ENCODE measurements at regions of chr2 and their contacts with region 1.

Region 1: GRCh38 chr2:169109502-169110409 is 40.4 kb downstream of the DHRS9 start:
- DNase-seq: peak; percentile 81
- H3K4me3 ChIP-seq: no peak overlapping the region
- H3K27ac ChIP-seq: no peak overlapping the region
- H3K4me1 ChIP-seq: peaks cover 11% of the 10 kb centered on the region
- H3K27me3 ChIP-seq: no peaks in the 10 kb centered on the region
- CTCF ChIP-seq: peak; percentile 82 to 91
- POLR2A ChIP-seq: no peak

Region 2: DNA sequence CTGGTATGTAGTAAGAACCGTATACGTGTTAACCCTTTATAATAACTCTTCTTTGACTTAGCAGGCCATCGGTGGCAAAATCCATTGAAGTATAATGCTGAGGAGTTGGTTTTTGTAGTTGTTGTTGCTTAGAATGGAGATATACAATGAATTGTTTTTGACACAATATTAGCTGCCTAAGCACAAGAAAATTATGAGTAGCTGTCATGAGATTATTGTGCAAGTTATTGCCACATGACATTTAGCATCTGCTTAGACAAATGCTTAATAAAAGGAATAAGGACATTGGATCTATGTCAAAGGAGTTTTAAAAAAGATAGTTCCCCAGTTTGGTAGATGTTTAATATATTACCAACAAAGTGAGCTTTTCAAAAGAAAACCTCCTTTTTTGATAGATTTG is 138.5 kb before region 1 on chr2:
- CTCF ChIA-PET with region 1: interaction called, 13 read pairs
- POLR2A ChIA-PET with region 1: no interaction called
- dilution Hi-C with region 1: no loop called
- intact Hi-C with region 1: no loop called
- DNase-seq: no peak
- H3K4me3 ChIP-seq: no peak overlapping the region
- H3K27ac ChIP-seq: no peak overlapping the region
- H3K4me1 ChIP-seq: no peaks in the 10 kb centered on the region
- H3K27me3 ChIP-seq: no peaks in the 10 kb centered on the region
- CTCF ChIP-seq: no peak
- POLR2A ChIP-seq: no peak

Region 3: DNA sequence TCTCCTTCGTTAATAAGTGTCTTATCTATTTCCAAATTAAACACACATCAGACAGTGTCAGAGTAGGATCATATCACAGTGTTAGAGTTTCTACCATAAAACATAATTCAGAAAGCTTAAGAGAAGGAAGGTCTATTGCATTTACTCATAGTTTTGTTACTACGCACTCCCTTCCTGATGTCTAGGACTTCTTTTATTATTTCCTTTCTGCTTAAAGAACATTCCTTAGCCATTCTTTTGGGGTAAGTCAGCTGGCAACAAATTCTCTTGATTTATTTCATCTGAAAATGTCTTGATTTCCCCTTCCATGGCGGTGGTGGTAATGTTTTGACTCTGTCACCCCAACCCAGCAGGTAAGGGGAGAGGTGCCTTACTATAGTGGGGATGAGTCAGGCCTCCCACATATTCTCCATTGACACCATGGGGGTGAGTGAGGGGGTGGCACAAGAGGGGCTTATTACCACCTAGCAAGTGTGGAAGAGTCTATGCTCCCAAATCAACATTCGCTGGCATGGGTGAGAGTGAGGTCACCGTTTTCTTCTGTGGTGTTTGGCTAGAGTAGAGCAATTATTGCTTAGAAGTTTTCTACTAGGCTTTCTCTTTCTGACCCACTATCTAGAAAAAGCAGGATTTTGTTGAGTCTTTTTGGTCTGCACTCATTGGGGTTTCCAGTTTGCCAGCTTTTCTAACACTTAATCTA is 108.5 kb before region 1 on chr2:
- CTCF ChIA-PET with region 1: interaction called, 6 read pairs
- POLR2A ChIA-PET with region 1: no interaction called
- dilution Hi-C with region 1: no loop called
- intact Hi-C with region 1: loop called (anchors 1 kb)
- DNase-seq: peak; percentile 88
- H3K4me3 ChIP-seq: peak overlapping the region in 1 of 3 experiments; percentile 43
- H3K27ac ChIP-seq: peak overlapping the region; percentile 100
- H3K4me1 ChIP-seq: peaks cover 66% of the 10 kb centered on the region
- H3K27me3 ChIP-seq: no peaks in the 10 kb centered on the region
- CTCF ChIP-seq: no peak
- POLR2A ChIP-seq: no peak

Region 4: DNA sequence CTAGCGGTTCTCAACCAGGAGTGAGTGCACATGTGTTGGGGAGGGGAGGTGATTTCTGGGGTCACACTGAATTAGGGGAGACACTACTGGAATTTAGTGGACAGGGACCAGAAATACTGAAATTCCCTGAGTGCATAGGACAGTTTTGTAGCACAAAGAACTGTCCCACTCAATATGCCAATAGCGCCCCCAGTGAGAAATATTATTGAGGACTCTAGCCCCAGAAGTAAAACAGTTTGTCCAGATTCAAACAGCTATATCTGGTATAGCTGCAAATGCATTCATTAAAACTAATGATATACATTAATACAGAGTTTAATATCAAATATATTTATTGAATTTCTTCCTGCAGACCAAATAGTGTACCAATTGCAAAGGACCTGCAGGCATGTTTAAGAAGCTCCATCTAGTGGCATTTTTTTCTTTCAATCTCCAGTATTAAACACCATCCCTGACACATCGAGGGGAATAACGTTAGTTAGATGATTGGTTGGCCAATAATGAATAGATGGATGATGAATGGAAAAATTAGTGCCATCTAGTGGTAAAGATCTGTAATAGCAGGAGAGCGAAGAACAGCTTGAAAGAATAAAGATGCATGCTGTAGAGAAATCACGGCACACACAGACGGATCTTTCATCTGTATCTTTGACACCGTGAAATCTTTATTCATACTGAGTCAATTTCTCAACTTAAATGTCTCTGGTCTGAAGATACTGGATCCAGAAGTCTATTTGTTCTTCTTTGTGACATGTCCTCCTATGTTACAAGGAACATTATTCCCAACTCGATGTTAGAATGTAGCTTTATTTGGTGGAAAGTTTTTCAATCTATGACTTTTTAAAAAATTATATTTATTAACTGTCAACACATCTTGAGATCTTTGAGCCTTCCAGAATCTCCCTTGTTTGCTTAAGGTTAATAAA is 22.1 kb after region 1 on chr2:
- CTCF ChIA-PET with region 1: interaction called, 217 read pairs
- POLR2A ChIA-PET with region 1: no interaction called
- dilution Hi-C with region 1: no loop called
- intact Hi-C with region 1: loop called (anchors 1 kb)
- DNase-seq: peak; percentile 77
- H3K4me3 ChIP-seq: no peak overlapping the region
- H3K27ac ChIP-seq: no peak overlapping the region
- H3K4me1 ChIP-seq: no peaks in the 10 kb centered on the region
- H3K27me3 ChIP-seq: no peaks in the 10 kb centered on the region
- CTCF ChIP-seq: peak; percentile 58
- POLR2A ChIP-seq: no peak

Region 5: DNA sequence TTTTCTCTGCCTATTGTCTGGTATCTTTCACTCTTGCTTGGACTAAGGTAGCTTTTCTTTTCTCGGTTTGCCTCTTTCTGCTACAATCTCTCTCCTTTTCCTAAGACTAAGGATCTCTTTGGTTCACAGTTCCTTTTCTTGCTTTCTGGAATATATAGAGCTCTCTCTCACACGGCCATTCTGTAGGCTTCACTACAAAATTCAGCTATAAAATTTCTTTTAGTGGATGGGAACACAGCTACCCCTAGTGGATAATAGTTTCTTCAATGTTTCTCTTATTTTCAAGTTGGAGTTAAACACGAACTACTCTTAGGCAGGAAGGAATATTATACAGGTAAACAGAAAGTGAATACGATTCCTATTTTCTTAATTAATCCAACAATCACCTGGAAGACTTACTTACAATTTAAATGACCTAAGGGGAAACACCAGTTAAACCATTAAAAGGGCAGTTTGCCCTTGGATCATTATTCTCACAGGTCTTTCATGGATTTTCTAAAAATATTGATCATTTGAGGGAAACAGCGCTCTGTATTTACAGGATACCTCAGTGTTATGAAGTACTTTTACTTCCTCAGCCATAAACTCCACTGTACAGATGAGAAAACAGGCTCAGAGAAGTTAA is 112.1 kb after region 1 on chr2:
- CTCF ChIA-PET with region 1: interaction called, 158 read pairs
- POLR2A ChIA-PET with region 1: no interaction called
- dilution Hi-C with region 1: no loop called
- intact Hi-C with region 1: loop called (anchors 1 kb)
- DNase-seq: peak; percentile 63
- H3K4me3 ChIP-seq: no peak overlapping the region
- H3K27ac ChIP-seq: no peak overlapping the region
- H3K4me1 ChIP-seq: peaks cover 4% of the 10 kb centered on the region
- H3K27me3 ChIP-seq: no peaks in the 10 kb centered on the region
- CTCF ChIP-seq: peak; percentile 25 to 34
- POLR2A ChIP-seq: no peak

Region 6: GRCh38 chr2:169397697-169398096 is 287.9 kb after region 1 on chr2:
- CTCF ChIA-PET with region 1: interaction called, 8 read pairs
- POLR2A ChIA-PET with region 1: no interaction called
- dilution Hi-C with region 1: no loop called
- intact Hi-C with region 1: loop called (anchors 1 kb)
- DNase-seq: no peak
- H3K4me3 ChIP-seq: no peak overlapping the region
- H3K27ac ChIP-seq: no peak overlapping the region
- H3K4me1 ChIP-seq: no peaks in the 10 kb centered on the region
- H3K27me3 ChIP-seq: peaks cover 7 to 12% of the 10 kb centered on the region in 2 experiments
- CTCF ChIP-seq: no peak
- POLR2A ChIP-seq: no peak